ENCODE measurements at regions of chr12 and their contacts with region 1.

Region 1: DNA sequence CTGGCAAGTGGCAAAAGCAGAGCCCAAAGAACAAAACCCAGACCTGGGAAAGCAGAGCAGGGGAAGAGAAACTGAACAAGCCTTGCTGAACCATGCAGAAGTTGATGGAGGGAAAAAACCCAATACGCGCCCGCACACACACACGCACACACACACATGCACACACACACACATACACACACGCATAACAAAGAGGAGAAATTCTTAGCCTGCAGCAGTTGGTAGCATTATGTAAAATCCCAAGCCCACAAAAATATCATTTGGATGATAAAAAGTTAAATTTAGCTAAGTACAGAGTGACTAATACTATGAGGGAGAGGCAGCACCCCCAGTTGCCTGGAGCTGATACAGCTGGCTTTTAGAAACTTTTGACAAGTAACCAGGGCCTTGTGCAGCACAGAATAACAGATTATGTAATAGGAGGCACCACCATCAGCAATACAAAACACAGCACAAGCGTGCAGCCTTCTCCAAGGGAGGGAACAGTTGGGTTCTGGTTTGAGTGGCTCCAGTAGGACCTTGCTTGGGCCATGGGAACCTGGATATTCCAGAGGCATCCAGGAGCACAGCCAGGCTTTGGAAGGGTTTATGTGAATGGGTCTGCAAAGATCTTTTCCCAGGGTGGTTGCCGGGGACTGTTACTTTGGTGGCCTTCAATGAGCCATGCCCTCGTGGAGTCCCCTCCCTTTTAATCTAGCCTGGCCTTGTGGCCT is 35.3 kb downstream of the PITPNM2 start:
- DNase-seq: peak; percentile 97
- ATAC-seq: peak; percentile 68
- H3K4me3 ChIP-seq: no peak overlapping the region
- H3K27ac ChIP-seq: no peak overlapping the region; the same call in 1 of the 2 replicates
- H3K4me1 ChIP-seq: peaks cover 32% of the 10 kb centered on the region
- H3K27me3 ChIP-seq: no peaks in the 10 kb centered on the region
- CTCF ChIP-seq: no peak
- POLR2A ChIP-seq: no peak
- RAD21 ChIP-seq: peak; percentile 18; the same call in 1 of the 2 replicates

Region 2: GRCh38 chr12:123126186-123127006 is 10.8 kb after region 1 on chr12:
- CTCF ChIA-PET with region 1: interaction called, 3 read pairs
- POLR2A ChIA-PET with region 1: no interaction called
- dilution Hi-C with region 1: no loop called
- in situ Hi-C with region 1: no loop called
- intact Hi-C with region 1: loop called (anchors 1 kb)
- DNase-seq: peak; percentile 98
- ATAC-seq: peak; percentile 85
- H3K4me3 ChIP-seq: no peak overlapping the region
- H3K27ac ChIP-seq: peak overlapping the region; percentile 93
- H3K4me1 ChIP-seq: peaks cover 14% of the 10 kb centered on the region
- H3K27me3 ChIP-seq: no peaks in the 10 kb centered on the region
- CTCF ChIP-seq: peak; percentile 38; the same call in 1 of the 2 replicates
- POLR2A ChIP-seq: no peak
- RAD21 ChIP-seq: peak; percentile 35

Region 3: DNA sequence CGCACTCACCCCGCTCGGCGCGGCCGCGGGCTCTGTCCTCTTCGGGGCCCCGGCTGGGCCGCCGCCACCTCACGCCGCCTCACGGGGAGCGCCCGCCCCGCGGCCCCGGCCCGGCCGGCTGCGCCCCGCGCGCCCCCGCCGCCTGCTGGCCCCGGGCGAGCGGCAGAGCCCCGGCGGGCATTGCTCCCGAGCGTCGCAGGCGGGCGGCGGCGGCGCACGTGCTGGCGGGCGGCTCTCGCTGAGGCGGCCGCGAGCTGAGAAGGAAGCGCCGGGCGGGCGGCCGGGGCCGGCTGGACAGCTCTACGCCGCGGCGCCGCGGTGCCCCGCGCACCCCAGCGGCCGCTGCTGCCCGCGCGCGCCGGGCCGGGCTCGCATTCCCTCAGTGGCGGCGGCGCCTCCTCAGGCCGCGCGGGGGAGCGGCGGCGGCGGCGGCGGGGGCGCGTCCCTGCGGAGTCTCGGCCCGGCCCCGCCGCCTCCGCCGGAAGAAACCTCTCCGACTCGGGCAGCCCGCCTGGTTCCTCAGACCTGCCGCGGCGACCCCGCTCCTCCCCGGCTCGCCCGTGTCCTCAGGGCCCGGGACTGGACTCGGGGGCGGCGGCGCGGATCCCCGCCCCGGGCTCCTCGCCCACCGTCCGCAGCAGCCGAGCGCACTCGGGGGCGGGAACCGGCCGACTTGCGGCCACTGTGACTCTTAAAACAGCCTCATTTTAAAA is 35.3 kb after region 1 on chr12 and contains the start of gene PITPNM2:
- CTCF ChIA-PET with region 1: no interaction called
- POLR2A ChIA-PET with region 1: no interaction called
- dilution Hi-C with region 1: no loop called
- in situ Hi-C with region 1: no loop called
- intact Hi-C with region 1: loop called (anchors 2 kb)
- DNase-seq: peak; percentile 58
- ATAC-seq: peak; percentile 94
- H3K4me3 ChIP-seq: peak within 1 kb of the TSS; percentile 53
- H3K27ac ChIP-seq: peak within 1 kb of the TSS; percentile 68
- H3K4me1 ChIP-seq: peaks cover 15% of the 10 kb centered on the region
- H3K27me3 ChIP-seq: no peaks in the 10 kb centered on the region
- CTCF ChIP-seq: peak; percentile 41
- POLR2A ChIP-seq: no peak
- RAD21 ChIP-seq: peak; percentile 49
- total RNA-seq, gene PITPNM2: 0.83 and 1.6 TPM in 2 replicates

Measured in IMR-90 (cell line).